ENCODE measurements at regions of chr15 and their contacts with region 1.

Region 1: GRCh38 chr15:56886932-56887781 is 31.3 kb upstream of the TCF12 start:
- DNase-seq: peak; percentile 97
- H3K4me3 ChIP-seq: peak overlapping the region; percentile 63 to 81 (median 68)
- H3K27ac ChIP-seq: peak overlapping the region; percentile 92 to 98 (median 96)
- H3K4me1 ChIP-seq: peaks cover 0 to 24% (median 14%) of the 10 kb centered on the region in 4 donors
- H3K27me3 ChIP-seq: no peaks in the 10 kb centered on the region
- CTCF ChIP-seq: no peak
- EP300 ChIP-seq: peak in 1 of 4 donors; percentile 42
- POLR2A ChIP-seq: peak; percentile 66 to 72

Region 2: DNA sequence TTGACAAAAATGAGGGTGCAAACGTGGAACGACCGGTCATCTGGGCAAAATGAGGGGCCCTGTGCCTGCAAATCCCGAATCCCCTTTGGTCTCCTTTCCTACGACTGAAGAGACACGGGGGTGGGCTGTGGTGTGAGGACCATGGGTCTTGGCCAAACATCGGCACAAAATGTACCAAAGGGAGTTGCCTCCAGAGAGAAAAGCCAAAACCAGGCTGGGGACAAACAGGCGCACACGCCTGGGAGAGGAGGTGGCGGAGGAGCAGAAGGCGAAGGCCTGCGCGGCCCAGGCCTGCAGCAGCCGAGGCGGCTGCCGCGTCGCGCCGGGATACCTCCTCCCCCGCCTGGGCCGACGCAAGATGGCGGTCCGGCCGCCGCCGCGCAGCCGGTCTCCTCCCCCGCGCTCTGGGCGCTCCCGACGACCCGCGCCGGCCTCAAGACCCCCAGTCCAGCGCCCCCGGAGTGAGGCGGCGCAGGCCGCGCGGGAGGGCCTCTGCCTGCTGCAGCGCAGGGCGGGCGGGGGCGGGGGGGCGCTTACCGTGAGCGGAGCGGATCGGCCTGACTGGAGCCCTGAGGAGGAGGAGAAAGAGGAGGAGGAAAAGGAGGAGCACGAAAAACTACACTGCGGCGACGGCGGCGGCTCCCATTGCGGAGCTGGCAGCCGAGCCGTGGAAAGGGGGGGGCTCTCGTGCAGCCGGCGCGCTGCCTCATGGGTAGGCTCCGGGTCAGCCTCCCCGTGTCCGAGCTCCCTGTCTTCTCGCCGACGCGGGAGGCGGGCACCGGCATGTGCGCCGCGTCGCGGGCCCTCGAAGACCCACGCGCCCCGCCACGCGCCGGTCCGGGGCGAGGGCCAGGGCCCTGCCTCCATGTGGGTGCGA is 154.0 kb before region 1 on chr15 and contains the start of gene ZNF280D:
- intact Hi-C with region 1: loop called (anchors 1 kb)
- DNase-seq: peak; percentile 95
- H3K4me3 ChIP-seq: peak within 1 kb of the TSS; percentile 54 to 90 (median 68)
- H3K27ac ChIP-seq: peak within 1 kb of the TSS; percentile 95 to 99 (median 98)
- H3K4me1 ChIP-seq: peaks cover 0 to 70% (median 63%) of the 10 kb centered on the region in 4 donors
- H3K27me3 ChIP-seq: no peaks in the 10 kb centered on the region
- CTCF ChIP-seq: no peak
- EP300 ChIP-seq: peak in 2 of 4 donors; percentile 30 to 47
- POLR2A ChIP-seq: peak in 1 of 2 donors; percentile 28
- total RNA-seq, gene ZNF280D: 53.6 to 75.3 (median 67.2) TPM

Region 3: DNA sequence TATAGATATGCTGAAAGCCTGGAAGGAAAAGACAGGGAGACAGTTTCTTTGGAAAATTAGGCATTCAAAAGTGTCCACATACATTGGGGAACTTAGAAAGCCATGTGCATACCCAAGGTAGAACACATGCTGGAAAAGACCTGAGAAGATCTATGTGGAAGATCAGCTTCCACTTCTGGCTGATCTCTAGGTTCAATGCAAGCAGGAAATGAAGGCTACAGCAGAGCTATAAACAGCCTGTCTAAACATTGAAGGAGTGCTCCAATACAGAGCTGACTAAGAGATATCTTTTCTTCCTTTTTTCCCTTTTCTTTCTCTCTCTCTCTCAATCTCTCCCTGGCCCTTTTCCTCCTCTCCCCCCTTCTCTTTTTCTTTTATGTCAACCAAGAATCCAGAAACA is 42.3 kb before region 1 on chr15:
- intact Hi-C with region 1: no loop called
- DNase-seq: no peak
- H3K4me3 ChIP-seq: no peak overlapping the region
- H3K27ac ChIP-seq: no peak overlapping the region
- H3K4me1 ChIP-seq: no peaks in the 10 kb centered on the region
- H3K27me3 ChIP-seq: no peaks in the 10 kb centered on the region
- CTCF ChIP-seq: no peak
- EP300 ChIP-seq: no peak
- POLR2A ChIP-seq: no peak

Region 4: DNA sequence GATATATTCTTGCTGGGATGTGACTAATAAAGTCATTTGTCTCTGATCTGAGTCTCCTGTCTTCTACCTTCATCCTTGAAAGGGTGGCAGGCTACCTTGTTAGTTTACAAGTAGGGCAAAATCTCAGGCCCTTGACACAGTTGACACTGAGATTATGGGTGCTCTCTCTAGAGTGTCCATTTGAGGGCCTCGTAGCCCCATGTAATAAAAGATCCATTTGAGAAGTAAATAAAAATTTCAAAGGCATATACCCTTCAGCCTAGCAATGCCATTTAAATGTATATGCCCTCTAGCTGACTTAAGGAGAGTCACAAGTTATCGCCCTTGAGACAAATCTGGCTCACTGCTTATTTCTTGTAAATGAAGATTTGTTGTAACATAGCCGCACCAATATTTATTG is 129.9 kb after region 1 on chr15:
- intact Hi-C with region 1: no loop called
- DNase-seq: no peak
- H3K4me3 ChIP-seq: no peak overlapping the region
- H3K27ac ChIP-seq: no peak overlapping the region
- H3K4me1 ChIP-seq: peaks cover 0 to 27% (median 22%) of the 10 kb centered on the region in 4 donors
- H3K27me3 ChIP-seq: no peaks in the 10 kb centered on the region
- CTCF ChIP-seq: no peak
- EP300 ChIP-seq: no peak
- POLR2A ChIP-seq: no peak